Right lobe of liver (tissue), 6 donors: ENCODE measurements at regions of chr12 and their contacts with region 1.

Region 1: DNA sequence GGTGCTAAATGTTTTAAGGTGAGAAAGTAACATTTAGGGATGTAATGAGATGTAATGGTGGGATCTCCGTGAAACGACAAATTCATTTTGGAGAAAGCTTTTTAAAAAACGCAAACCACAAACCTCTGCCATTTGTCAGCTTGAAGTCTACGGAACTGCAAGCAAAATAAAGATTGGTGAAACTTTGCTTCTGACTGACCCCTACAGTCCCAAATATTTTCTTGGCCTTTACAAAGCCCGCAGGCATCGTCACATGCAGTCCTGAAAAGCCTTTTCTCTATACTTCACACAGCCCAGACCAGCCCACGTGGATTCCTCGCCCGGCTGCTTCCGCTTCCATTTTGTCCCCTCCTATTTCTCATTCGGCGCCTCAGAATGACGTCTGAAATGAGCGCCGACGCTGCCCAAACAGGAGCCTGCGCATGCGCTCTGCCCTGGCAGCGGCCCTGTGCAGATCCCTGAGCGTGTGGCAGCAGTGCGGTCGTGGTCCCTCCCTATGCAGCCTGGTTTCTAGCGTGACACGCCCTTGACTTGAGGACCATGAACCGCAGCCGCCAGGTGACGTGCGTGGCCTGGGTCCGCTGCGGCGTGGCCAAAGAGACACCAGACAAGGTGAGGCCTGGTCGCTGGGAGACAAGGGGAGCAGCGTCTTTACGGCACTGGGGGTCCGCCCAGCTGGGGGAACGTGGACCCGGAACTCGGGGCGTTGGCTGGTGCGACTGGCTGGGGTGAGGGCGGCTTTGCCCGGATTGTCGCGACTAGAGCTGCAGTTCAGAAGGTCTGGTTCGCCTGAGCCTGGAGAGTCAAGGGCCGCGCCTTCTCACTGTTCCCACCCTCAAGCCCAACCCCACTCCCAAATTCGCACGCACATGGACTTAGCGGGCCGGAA is at the start of gene PWP1:
- DNase-seq: peak; percentile 94 to 96 (median 96)
- ATAC-seq: peak; percentile 91 to 95 (median 93)
- H3K4me3 ChIP-seq: peak within 1 kb of the TSS; percentile 78 to 95 (median 79)
- H3K27ac ChIP-seq: peak within 1 kb of the TSS; percentile 34 to 83 (median 41)
- H3K4me1 ChIP-seq: peaks cover 0 to 15% (median 0%) of the 10 kb centered on the region in 4 donors
- H3K27me3 ChIP-seq: no peaks in the 10 kb centered on the region
- CTCF ChIP-seq: no peak
- POLR2A ChIP-seq: peak; percentile 73
- total RNA-seq, gene PWP1: 10.1 to 47.3 (median 16.6) TPM

Region 2: DNA sequence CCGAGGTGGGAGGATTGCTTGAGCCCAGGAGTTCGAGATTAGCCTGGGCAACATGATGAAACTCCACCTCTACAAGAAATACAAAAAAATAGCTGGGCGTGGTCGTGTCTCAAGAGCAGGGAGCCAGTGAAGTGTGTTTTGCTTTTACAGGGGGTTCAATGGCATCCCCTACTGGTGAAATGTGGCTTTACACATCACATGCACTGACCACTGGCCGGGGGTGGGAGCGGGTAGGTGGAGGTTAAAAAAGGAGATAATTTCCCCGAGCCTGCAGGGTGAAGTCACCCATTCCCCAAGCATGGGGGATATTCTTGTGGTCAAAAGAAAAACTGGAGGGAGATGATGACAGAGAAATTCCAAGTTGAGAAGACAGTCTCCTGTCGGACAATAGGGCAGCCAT is 63.6 kb before region 1 on chr12:
- intact Hi-C with region 1: no loop called
- DNase-seq: no peak
- ATAC-seq: no peak
- H3K4me3 ChIP-seq: no peak overlapping the region
- H3K27ac ChIP-seq: no peak overlapping the region
- H3K4me1 ChIP-seq: no peaks in the 10 kb centered on the region
- H3K27me3 ChIP-seq: no peaks in the 10 kb centered on the region
- CTCF ChIP-seq: peak; percentile 29 to 50 (median 36)
- POLR2A ChIP-seq: no peak

Region 3: DNA sequence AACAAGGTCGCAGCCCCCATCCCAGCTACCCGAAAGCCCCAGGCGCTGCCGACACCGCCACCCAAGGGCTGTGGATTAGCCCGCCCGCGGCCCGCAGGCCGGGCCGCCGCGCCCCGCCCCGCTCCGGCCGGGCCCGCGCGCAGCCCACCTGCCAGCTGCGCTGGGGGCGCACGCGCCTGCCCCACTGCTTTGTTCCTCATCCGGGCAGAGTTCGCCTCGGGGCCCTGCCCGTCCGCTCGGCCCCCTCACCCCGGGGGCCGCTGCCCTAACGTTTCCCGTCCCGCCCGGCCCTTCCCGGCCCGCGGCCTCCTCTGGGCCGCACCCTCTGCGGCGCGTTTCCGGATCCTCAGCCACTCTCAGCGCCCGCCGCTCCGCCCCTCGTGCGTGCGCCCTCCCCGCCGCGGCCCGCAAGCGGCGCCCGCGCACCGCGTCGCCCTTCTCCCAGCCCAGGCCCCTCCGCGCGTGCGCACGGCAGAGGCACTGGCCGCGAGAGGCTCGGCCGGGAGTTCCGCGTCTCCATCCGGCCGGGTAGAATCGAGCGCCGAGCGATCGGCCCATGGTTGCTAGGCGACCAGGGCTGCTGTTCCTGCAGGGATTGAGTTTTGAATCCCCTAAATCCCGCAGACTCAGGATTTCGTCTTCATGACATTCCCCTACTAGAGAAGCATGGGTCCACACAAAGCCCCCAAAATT is 75.4 kb after region 1 on chr12 and contains the start of gene PRDM4:
- intact Hi-C with region 1: loop called in 1 of 2 experiments (anchors 10 kb)
- DNase-seq: peak; percentile 94 to 95 (median 95)
- ATAC-seq: peak; percentile 98 to 99 (median 98)
- H3K4me3 ChIP-seq: peak within 1 kb of the TSS; percentile 79 to 82 (median 81)
- H3K27ac ChIP-seq: peak within 1 kb of the TSS in 2 of 3 donors; percentile 39 to 41
- H3K4me1 ChIP-seq: peaks cover 0 to 18% (median 5%) of the 10 kb centered on the region in 4 donors
- H3K27me3 ChIP-seq: no peaks in the 10 kb centered on the region
- CTCF ChIP-seq: peak; percentile 45 to 62 (median 46)
- POLR2A ChIP-seq: peak; percentile 92
- total RNA-seq, gene PRDM4: 5.9 to 8.2 (median 7.1) TPM